ENCODE measurements at regions of chr2 and their contacts with region 1.

Region 1: GRCh38 chr2:218301176-218301819 is 9.0 kb upstream of the TMBIM1 start:
- DNase-seq: peak; percentile 78 to 94
- ATAC-seq: peak; percentile 97 to 99 (median 98)
- H3K4me3 ChIP-seq: no peak overlapping the region
- H3K4me3 Mint-ChIP-seq: no peak overlapping the region
- H3K27ac ChIP-seq: no peak overlapping the region
- H3K27ac Mint-ChIP-seq: peak overlapping the region; percentile 45 to 51
- H3K4me1 ChIP-seq: peaks cover 7% of the 10 kb centered on the region
- H3K4me1 Mint-ChIP-seq: peaks cover 7% of the 10 kb centered on the region in 2 donors
- H3K27me3 ChIP-seq: no peaks in the 10 kb centered on the region
- H3K27me3 Mint-ChIP-seq: no peaks in the 10 kb centered on the region
- CTCF ChIP-seq: peak; percentile 92

Region 2: DNA sequence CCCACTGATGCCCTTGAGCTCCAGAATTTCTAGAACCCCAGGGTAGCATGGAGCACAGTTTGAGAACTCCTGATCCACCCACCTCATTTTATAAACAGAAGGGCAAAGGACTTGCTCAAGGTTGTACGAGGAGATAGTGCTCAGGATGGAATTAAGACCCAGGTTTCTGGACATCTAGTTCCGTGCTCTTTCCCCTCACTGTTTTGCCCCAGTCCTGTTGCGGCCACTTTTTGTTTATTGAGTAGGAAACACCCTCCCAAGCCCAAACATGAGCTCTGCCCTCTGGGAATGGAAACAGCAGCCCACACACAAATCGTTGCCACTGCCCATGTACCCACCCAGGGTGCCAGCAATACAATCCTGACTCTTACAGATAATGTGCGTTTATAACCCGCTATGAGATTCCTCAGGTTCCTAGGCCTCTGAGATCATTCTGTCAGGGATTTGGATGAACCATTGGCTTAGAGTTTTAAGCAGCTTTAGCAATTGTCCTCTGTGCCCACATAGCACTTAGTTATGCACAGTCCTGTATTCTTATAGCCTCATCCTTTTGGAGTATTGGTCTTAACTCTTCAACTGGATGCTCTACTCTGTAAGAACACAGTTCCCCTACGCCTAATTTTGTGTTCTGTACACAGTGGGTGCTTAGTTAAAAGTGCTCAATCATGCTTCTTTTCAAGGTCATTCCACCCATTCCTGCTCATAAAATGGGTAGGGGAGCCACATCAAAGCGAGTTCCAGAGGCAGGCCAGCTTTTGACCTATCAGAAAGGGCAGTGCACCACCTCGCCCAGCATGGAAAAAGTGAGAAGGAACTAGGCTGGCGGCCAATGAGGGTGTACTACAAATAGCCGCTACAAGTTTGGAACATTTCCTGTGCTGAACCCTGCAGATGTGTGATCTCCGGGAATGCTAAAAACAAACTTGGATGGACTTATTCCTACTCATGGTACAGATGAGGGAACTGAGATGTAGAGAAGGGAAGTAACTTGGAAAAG is 1728.4 kb before region 1 on chr2:
- intact Hi-C with region 1: no loop called
- DNase-seq: no peak
- ATAC-seq: no peak
- H3K4me3 ChIP-seq: no peak overlapping the region
- H3K4me3 Mint-ChIP-seq: no peak overlapping the region
- H3K27ac ChIP-seq: no peak overlapping the region
- H3K27ac Mint-ChIP-seq: no peak overlapping the region
- H3K4me1 ChIP-seq: peaks cover 5% of the 10 kb centered on the region
- H3K4me1 Mint-ChIP-seq: peaks cover 14 to 20% of the 10 kb centered on the region in 2 donors
- H3K27me3 ChIP-seq: no peaks in the 10 kb centered on the region
- H3K27me3 Mint-ChIP-seq: peaks cover 11 to 14% of the 10 kb centered on the region in 2 donors
- CTCF ChIP-seq: no peak

Region 3: GRCh38 chr2:218286570-218287459 is 14.5 kb before region 1 on chr2:
- intact Hi-C with region 1: loop called (anchors 2 kb)
- DNase-seq: peak; percentile 77 to 96
- ATAC-seq: peak; percentile 66 to 87 (median 75)
- H3K4me3 ChIP-seq: peak overlapping the region; percentile 40
- H3K4me3 Mint-ChIP-seq: peak overlapping the region; percentile 92
- H3K27ac ChIP-seq: peak overlapping the region; percentile 99
- H3K27ac Mint-ChIP-seq: peak overlapping the region; percentile 100
- H3K4me1 ChIP-seq: peaks cover 92% of the 10 kb centered on the region
- H3K4me1 Mint-ChIP-seq: peaks cover 70 to 94% of the 10 kb centered on the region in 2 donors
- H3K27me3 ChIP-seq: no peaks in the 10 kb centered on the region
- H3K27me3 Mint-ChIP-seq: no peaks in the 10 kb centered on the region
- CTCF ChIP-seq: no peak

Region 4: DNA sequence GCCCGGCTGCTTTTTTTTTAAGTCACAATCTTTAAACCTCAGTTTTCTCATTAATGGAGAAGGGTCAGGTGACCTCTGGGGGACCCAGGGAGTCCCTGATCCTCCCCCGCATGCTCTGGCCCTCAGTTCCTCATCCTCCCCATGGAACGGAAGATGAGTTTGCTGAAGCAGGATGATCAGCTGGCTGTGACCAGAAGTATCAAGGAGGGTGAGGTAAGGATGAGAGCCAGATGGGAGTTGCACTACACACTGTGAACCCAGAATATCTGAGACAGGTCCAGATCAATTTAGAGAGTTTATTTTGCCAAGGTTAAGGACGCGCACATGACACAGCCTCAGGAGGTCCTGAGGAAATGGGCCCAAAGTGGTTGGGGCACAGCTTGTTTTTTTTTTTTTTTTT is 59.1 kb after region 1 on chr2:
- intact Hi-C with region 1: loop called (anchors 2 kb)
- DNase-seq: no peak
- ATAC-seq: no peak
- H3K4me3 ChIP-seq: no peak overlapping the region
- H3K4me3 Mint-ChIP-seq: no peak overlapping the region
- H3K27ac ChIP-seq: no peak overlapping the region
- H3K27ac Mint-ChIP-seq: no peak overlapping the region
- H3K4me1 ChIP-seq: peaks cover 12% of the 10 kb centered on the region
- H3K4me1 Mint-ChIP-seq: no peaks in the 10 kb centered on the region
- H3K27me3 ChIP-seq: no peaks in the 10 kb centered on the region
- H3K27me3 Mint-ChIP-seq: no peaks in the 10 kb centered on the region
- CTCF ChIP-seq: no peak

Region 5: DNA sequence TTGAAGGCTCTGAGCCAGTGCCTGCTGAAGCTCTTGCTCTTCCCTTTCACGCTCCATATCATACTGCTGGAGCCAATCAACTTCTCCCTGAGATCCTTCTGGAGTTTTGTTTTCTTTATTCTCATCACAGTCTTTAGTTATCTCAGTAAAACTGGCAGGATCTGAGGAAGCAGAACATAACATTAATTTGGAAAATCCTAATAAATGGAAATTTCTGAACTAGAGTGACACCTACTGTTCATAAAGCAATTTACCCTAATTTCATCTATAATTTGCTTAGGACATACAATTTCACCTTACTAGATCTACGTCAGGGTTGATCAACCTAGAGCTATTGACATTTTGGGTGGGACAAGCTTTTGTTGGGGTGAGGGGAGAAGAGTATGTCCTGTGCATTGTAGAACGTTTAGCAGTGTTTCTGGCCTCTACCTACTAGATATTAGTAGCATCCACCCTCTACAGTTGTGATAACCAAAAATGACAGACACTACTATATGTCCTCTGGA is 164.8 kb after region 1 on chr2:
- intact Hi-C with region 1: loop called (anchors 2 kb)
- DNase-seq: peak in 1 of 2 donors; percentile 48
- ATAC-seq: peak in 2 of 3 donors; percentile 45 to 47
- H3K4me3 ChIP-seq: no peak overlapping the region
- H3K4me3 Mint-ChIP-seq: no peak overlapping the region
- H3K27ac ChIP-seq: no peak overlapping the region
- H3K27ac Mint-ChIP-seq: peak overlapping the region in 1 of 2 donors; percentile 36
- H3K4me1 ChIP-seq: no peaks in the 10 kb centered on the region
- H3K4me1 Mint-ChIP-seq: peaks cover 18% of the 10 kb centered on the region in 2 donors
- H3K27me3 ChIP-seq: no peaks in the 10 kb centered on the region
- H3K27me3 Mint-ChIP-seq: no peaks in the 10 kb centered on the region
- CTCF ChIP-seq: peak; percentile 65

Region 6: DNA sequence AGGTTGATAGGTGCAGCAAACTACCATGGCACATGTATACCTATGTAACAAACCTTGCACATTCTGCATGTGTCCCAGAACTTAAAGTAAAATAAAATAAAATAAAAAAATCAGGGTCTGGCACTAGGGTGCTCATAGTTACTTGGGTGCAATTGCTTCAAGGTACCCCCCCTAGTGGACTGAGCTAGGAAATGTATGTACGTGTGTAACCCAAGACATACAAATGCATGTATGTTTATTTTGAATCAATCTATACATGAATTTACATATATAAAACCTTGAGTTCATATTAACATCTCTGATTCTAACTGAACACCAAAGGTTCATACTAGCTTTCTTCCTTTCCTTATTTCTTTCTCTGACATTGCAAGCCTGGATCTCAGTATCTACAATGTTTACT is 215.3 kb after region 1 on chr2:
- intact Hi-C with region 1: loop called (anchors 2 kb)
- DNase-seq: peak in 1 of 2 donors; percentile 70
- ATAC-seq: peak; percentile 67 to 88 (median 81)
- H3K4me3 ChIP-seq: no peak overlapping the region
- H3K4me3 Mint-ChIP-seq: no peak overlapping the region
- H3K27ac ChIP-seq: no peak overlapping the region
- H3K27ac Mint-ChIP-seq: peak overlapping the region in 1 of 2 donors; percentile 20
- H3K4me1 ChIP-seq: no peaks in the 10 kb centered on the region
- H3K4me1 Mint-ChIP-seq: no peaks in the 10 kb centered on the region
- H3K27me3 ChIP-seq: no peaks in the 10 kb centered on the region
- H3K27me3 Mint-ChIP-seq: no peaks in the 10 kb centered on the region
- CTCF ChIP-seq: peak; percentile 77

Region 7: GRCh38 chr2:218648088-218648786 is 346.9 kb after region 1 on chr2:
- intact Hi-C with region 1: loop called (anchors 1 kb)
- DNase-seq: peak; percentile 30 to 76
- ATAC-seq: peak; percentile 78 to 94 (median 90)
- H3K4me3 ChIP-seq: no peak overlapping the region
- H3K4me3 Mint-ChIP-seq: no peak overlapping the region
- H3K27ac ChIP-seq: no peak overlapping the region
- H3K27ac Mint-ChIP-seq: peak overlapping the region in 1 of 2 donors; percentile 21
- H3K4me1 ChIP-seq: no peaks in the 10 kb centered on the region
- H3K4me1 Mint-ChIP-seq: peaks cover 17 to 18% of the 10 kb centered on the region in 2 donors
- H3K27me3 ChIP-seq: no peaks in the 10 kb centered on the region
- H3K27me3 Mint-ChIP-seq: no peaks in the 10 kb centered on the region
- CTCF ChIP-seq: peak; percentile 73

Region 8: DNA sequence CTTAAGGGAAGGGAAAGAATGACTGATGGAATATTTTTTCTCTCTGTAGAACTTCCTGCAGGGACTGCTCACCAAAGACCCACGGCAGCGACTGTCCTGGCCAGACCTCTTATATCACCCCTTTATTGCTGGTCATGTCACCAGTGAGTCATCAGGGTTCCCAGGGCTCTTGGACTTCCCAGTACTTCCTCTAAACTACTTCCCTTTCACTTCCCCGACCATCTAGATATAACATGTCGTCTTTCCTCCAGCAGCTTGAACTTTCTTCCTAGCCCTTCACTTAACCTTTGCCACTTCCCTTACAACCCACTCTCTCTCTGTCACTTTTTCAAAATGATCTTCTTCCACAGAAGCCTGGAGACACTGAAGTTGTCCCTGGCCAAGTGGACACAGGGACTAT is 377.8 kb after region 1 on chr2:
- intact Hi-C with region 1: no loop called
- DNase-seq: no peak
- ATAC-seq: no peak
- H3K4me3 ChIP-seq: no peak overlapping the region
- H3K4me3 Mint-ChIP-seq: no peak overlapping the region
- H3K27ac ChIP-seq: no peak overlapping the region
- H3K27ac Mint-ChIP-seq: no peak overlapping the region
- H3K4me1 ChIP-seq: no peaks in the 10 kb centered on the region
- H3K4me1 Mint-ChIP-seq: no peaks in the 10 kb centered on the region
- H3K27me3 ChIP-seq: no peaks in the 10 kb centered on the region
- H3K27me3 Mint-ChIP-seq: no peaks in the 10 kb centered on the region
- CTCF ChIP-seq: no peak